ENCODE measurements at regions of chr10 and their contacts with region 1.

Region 1: GRCh38 chr10:22340362-22341189 is 4.7 kb upstream of the SPAG6 start:
- DNase-seq: peak; percentile 69
- H3K4me3 Mint-ChIP-seq: peak overlapping the region; percentile 85
- H3K27ac Mint-ChIP-seq: peak overlapping the region; percentile 90
- H3K4me1 Mint-ChIP-seq: peaks cover 45% of the 10 kb centered on the region
- H3K27me3 Mint-ChIP-seq: peaks cover 70% of the 10 kb centered on the region

Region 2: DNA sequence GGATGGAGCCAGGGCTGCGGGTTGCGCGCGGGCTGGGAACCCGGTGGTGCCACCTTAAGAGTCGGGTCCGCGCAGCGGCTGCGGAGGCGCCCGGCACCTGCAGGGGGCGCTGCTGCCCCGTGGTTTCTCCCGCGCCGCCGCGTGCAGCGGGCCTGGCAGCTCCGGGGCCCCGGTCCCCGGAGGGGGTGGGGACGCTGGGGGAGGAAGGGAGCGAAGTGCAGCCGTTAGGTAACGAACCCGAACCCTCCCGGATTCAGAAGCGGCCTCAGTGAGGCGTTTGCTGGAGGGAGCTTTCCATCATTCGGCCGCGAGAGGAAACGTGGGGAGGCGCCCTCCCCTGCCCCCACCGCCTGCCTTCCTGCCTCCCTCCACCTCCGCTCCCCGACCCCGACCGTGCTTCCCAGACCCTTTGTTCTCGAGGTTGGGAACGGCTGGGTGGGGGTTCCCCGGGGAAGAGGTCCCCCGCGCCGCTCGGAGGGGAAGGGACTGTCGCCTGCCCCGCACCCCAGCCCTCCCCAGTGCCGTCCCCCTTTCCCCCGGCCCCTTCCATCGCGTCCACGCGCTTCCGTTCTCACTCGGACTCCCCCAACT is 844.7 kb before region 1 on chr10:
- intact Hi-C with region 1: loop called (anchors 5 kb)
- DNase-seq: peak; percentile 82
- H3K4me3 Mint-ChIP-seq: peak overlapping the region; percentile 84
- H3K27ac Mint-ChIP-seq: no peak overlapping the region
- H3K4me1 Mint-ChIP-seq: peaks cover 17% of the 10 kb centered on the region
- H3K27me3 Mint-ChIP-seq: peaks cover 68% of the 10 kb centered on the region

Region 3: DNA sequence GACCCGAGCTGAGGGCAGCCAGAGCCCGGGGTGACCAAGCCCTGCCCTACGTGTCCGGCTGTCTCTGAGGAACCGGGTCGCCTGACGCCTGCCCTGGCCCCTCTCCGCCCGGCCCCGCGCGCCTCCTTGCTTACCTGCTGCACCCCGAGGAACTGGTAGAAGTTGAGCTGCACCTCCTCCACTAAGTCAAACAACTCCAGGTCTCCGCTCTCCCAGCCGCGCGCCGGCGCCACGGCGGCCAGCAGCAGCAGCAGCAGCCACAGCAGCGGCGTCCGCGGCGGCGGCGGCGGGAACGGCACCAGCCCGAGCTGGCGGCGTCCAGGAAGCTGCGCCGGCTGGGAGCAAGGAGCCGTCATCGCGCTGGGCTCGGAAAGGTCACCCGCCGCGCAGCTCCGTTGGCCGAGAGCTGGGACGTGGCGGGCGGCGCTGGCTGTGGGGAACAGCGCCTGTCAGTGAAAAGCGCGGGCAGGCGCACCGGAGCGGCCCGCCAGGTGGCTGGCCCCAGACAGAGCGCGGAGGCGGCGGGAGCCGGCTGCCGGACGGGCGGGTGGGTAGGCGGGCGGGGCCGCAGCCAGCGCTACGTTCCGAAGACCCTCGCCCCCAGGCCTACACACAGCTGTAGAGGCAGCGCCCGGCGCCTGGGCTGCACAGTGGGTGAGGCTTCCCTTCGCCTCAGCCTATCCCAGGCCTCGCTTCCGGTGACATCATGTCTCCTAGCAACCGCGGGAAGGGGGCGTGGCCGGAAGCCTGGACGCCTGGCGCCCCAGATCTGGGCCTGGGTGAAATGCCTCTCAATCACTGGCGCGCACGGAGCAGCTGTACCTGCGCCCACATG is 337.3 kb before region 1 on chr10 and contains the start of gene DNAJC1:
- intact Hi-C with region 1: loop called (anchors 2 kb)
- DNase-seq: peak; percentile 96
- H3K4me3 Mint-ChIP-seq: peak within 1 kb of the TSS; percentile 96
- H3K27ac Mint-ChIP-seq: peak within 1 kb of the TSS; percentile 91
- H3K4me1 Mint-ChIP-seq: peaks cover 34% of the 10 kb centered on the region
- H3K27me3 Mint-ChIP-seq: peaks cover 12% of the 10 kb centered on the region
- total RNA-seq, gene DNAJC1: 24.0 and 24.5 TPM in 2 replicates

Region 4: DNA sequence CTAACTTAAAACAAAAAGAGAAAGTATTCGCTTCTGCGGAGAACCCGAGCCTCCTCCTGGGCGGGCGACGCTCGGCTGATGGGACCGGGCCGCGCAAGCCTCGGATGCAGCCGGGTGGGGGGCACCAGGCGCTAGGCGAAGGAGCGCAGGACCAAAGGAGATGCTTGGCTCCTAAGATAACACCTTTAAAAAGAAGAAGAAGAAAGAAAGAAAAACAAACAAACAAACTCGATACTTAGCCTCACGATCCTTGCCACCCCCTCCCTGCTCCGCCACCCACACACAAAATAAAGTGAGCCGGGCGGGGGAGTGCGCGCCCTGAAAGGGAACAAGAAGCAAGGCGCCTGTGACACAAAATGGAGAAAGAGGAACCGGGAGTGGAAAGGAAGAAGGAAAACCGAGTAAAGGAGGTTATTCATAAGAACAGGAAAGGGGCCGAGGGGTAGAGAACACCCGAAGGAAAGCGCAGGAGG is 88.8 kb before region 1 on chr10:
- intact Hi-C with region 1: loop called (anchors 1 kb)
- DNase-seq: peak; percentile 59
- H3K4me3 Mint-ChIP-seq: peak overlapping the region; percentile 94
- H3K27ac Mint-ChIP-seq: peak overlapping the region; percentile 100
- H3K4me1 Mint-ChIP-seq: peaks cover 30% of the 10 kb centered on the region
- H3K27me3 Mint-ChIP-seq: peaks cover 16% of the 10 kb centered on the region

Region 5: DNA sequence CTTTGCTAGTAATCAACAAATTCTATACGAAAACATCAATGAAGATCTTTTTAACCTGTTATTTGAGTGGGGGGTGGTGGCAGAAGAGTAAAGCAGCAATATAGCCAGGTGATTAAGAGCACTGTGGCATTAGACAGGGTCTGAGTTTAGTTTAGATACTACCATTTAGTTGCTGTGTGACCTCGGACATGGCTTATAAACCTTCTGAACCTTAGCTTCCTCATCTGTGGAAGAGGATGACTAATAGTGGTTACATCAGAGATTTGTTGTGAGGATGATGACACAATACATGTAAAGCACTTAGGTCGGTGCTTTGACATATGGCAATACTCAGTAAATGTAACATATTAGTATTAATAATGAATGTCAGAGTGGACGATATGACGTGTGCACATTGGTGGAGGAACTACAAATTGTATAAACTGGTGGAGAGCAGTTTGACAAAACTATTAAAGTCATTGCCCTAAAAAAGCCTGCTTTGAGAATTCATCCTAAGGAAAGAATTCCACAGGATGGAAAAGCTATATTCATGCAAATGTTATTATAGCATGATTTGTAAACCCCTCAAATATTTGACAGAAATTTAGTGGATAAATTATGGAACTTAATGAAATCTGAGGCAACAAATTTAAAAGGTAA is 29.0 kb after region 1 on chr10:
- intact Hi-C with region 1: loop called (anchors 2 kb)
- DNase-seq: no peak
- H3K4me3 Mint-ChIP-seq: no peak overlapping the region
- H3K27ac Mint-ChIP-seq: no peak overlapping the region
- H3K4me1 Mint-ChIP-seq: peaks cover 42% of the 10 kb centered on the region
- H3K27me3 Mint-ChIP-seq: no peaks in the 10 kb centered on the region

Region 6: GRCh38 chr10:22475651-22476600 is 135.3 kb after region 1 on chr10:
- intact Hi-C with region 1: loop called (anchors 2 kb)
- DNase-seq: no peak
- H3K4me3 Mint-ChIP-seq: peak overlapping the region; percentile 83
- H3K27ac Mint-ChIP-seq: peak overlapping the region; percentile 28
- H3K4me1 Mint-ChIP-seq: peaks cover 6% of the 10 kb centered on the region
- H3K27me3 Mint-ChIP-seq: peaks cover 57% of the 10 kb centered on the region

Measured in activated T-helper 2 cell treated with anti-CD3 and anti-CD28 coated beads, Interferon-gamma antibody, Interleukin-2, Interleukin-4, amounts not matched to agents 10 μg/mL and 5 μg/mL and 100 μg/mL, durations not matched to agents 14 hours and 24 hours and 36 hours (primary cell).